Heart right ventricle (tissue), 16 donors: ENCODE measurements at regions of chr17 and their contacts with region 1.

Region 1: DNA sequence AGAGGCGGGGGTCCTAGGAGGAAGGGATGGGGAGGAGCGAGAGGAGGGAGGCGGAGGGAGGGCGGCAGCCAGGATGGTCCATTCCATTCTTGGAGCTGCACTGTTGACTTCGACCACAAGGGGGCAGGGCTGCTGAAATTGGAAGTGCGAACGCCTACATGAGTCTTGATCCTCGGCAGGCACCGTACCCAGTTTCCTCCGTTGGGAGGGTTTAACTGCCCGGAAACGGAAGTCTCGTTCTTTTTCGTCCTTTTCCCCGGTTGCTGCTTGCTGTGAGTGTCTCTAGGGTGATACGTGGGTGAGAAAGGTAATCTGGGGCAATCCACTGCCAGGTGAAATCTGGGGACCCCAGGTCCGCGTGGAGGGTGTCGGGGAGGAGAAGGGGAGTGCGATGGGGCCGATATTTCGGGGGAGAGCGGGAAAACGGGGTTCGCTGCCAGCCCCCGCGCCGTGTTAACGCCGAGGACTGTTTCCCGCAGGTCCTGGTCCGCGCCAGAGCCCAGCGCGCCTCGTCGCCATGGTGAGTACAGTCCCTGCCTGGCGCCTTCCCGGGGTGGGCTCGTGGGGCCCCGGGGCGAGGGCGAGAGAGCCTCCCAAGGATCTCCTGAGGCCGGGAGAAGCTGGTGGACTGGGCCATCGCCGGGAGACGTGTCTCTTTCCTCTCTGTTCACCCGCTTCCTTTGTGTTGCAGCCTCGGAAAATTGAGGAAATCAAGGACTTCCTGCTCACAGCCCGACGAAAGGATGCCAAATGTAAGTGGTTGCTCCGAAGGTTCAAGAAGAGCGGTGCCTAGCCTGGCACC is at the start of gene RPL38:
- DNase-seq: peak; percentile 92 to 98
- ATAC-seq: peak; percentile 80 to 94 (median 88)
- H3K4me3 ChIP-seq: peak within 1 kb of the TSS; percentile 76 to 100 (median 94)
- H3K27ac ChIP-seq: peak within 1 kb of the TSS in 9 of 10 donors; percentile 73 to 95 (median 84)
- H3K4me1 ChIP-seq: peaks cover 9 to 58% (median 45%) of the 10 kb centered on the region in 9 donors
- H3K27me3 ChIP-seq: peaks cover 0 to 29% (median 23%) of the 10 kb centered on the region in 7 donors
- CTCF ChIP-seq: peak; percentile 92 to 97 (median 95)
- total RNA-seq, gene RPL38: 661 to 847 (median 735) TPM

Region 2: DNA sequence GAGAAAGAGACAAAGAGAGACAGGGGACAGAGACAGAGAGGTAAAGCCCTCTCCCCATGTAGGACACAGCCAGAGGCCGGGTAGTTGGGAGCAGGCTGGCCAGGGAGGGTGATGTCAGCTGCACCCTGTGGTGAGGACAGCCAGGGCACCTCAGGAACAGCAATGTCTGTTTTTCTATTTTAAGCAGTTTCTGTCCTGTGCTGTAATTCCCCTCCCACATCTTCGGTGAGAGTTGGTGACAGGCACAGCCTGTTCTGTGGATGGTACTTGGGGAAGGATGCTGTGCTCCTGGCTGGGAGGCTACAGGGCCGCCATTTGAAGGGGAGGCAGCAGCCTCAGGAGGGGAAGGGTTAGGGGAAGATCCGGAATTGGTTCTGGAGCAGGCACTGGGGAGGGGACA is 722.9 kb before region 1 on chr17:
- intact Hi-C with region 1: loop called in 1 of 10 experiments (anchors 5 kb)
- DNase-seq: peak; percentile 48 to 55
- ATAC-seq: peak; percentile 80 to 93 (median 88)
- H3K4me3 ChIP-seq: no peak overlapping the region
- H3K27ac ChIP-seq: peak overlapping the region in 5 of 10 donors; percentile 22 to 77 (median 29)
- H3K4me1 ChIP-seq: peaks cover 0 to 37% (median 7%) of the 10 kb centered on the region in 9 donors
- H3K27me3 ChIP-seq: peaks cover 0 to 5% (median 0%) of the 10 kb centered on the region in 7 donors
- CTCF ChIP-seq: no peak

Region 3: GRCh38 chr17:74245145-74245831 is 41.6 kb after region 1 on chr17:
- intact Hi-C with region 1: loop called in 1 of 10 experiments (anchors 5 kb)
- DNase-seq: no peak
- ATAC-seq: no peak
- H3K4me3 ChIP-seq: no peak overlapping the region
- H3K27ac ChIP-seq: no peak overlapping the region
- H3K4me1 ChIP-seq: peaks cover 14 to 48% (median 38%) of the 10 kb centered on the region in 9 donors
- H3K27me3 ChIP-seq: no peaks in the 10 kb centered on the region
- CTCF ChIP-seq: no peak

Region 4: DNA sequence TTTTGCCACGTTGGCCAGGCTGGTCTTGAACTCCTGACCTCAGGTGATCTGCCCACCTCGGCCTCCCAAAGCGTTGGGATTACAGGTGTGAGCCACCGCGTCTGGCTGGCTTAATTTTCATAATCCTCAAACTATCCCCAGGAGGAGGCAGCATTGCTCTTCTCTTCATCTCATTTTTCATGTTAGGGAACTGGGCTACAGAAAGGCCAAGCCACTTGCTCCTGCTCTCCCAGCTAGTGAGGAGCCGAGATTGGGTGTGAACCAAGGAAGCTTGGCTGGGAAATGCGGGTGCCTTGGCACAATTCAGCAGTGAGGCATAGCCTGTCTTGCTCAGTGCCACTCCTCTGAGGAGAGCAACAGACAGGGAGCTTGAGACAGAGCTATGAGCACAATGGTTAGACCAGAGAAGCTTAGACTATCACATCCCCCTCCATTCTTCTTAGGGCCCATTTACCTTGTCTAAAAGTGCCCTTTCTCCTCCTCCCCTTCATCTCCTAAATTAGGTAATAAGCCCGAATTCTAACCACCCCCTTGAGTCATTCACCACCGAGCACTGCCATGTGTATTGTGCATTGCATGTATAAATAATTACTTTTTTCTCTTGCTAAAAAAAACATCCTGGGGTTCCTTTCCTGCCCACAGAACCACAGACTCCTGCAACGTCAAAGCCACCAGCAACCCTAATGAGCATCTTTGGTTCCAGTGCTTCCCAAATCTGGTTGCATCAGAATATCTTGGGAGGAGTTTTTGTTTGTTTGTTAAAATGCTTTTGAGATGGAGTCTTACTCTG is 102.4 kb after region 1 on chr17:
- intact Hi-C with region 1: loop called in 1 of 10 experiments (anchors 5 kb)
- DNase-seq: no peak
- ATAC-seq: peak in 1 of 8 donors; percentile 21
- H3K4me3 ChIP-seq: no peak overlapping the region
- H3K27ac ChIP-seq: no peak overlapping the region
- H3K4me1 ChIP-seq: peaks cover 0 to 14% (median 4%) of the 10 kb centered on the region in 9 donors
- H3K27me3 ChIP-seq: no peaks in the 10 kb centered on the region
- CTCF ChIP-seq: peak in 5 of 9 donors; percentile 10 to 33 (median 23)

Region 5: DNA sequence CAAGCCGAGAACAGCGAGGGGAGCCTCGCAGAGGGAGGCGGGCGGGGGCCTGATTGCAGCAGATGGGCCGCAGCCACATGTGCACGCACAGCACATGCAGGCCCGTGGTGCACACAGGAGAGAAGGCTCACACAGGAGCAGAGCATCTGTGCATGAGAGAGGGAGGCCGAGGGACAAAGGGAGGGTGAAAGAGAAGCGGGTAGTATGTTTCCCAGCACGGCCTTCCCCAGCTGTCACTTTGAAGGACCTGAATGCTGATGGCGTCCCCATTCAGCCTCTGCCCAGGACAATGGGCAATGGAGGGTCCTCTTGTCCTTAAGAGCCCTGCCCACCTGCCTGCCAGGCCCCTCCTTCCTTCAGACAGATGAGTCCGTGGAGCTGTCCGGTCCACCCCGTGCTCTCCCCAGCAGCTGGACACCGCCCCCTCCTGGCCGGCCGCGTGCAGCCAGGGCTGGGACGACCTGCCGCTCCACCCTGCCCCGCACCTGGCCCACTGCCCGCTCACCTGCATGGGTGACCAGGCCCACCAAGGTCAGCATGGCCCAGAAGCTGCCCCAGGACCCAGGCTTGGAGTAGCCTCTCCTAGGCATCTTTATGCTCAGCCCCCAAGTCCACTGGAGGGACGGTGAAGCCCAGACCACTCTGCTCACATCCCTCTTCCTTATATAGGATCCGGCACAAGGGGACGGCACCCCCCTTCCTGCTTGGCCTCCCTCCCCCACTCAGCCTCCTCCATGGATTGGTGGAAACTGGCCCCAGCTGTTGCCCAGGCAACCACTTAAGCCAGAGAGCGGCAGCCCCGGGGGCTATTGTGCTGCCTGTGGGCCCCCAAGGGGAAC is 157.8 kb after region 1 on chr17 and contains the start of gene BTBD17:
- intact Hi-C with region 1: loop called in 1 of 10 experiments (anchors 5 kb)
- DNase-seq: peak; percentile 46 to 70
- ATAC-seq: peak; percentile 75 to 90 (median 82)
- H3K4me3 ChIP-seq: no peak within 1 kb of the TSS
- H3K27ac ChIP-seq: no peak within 1 kb of the TSS
- H3K4me1 ChIP-seq: peaks cover 0 to 18% (median 9%) of the 10 kb centered on the region in 9 donors
- H3K27me3 ChIP-seq: peaks cover 9 to 66% (median 61%) of the 10 kb centered on the region in 7 donors
- CTCF ChIP-seq: peak; percentile 52 to 83 (median 79)
- total RNA-seq, gene BTBD17: not detected

Region 6: DNA sequence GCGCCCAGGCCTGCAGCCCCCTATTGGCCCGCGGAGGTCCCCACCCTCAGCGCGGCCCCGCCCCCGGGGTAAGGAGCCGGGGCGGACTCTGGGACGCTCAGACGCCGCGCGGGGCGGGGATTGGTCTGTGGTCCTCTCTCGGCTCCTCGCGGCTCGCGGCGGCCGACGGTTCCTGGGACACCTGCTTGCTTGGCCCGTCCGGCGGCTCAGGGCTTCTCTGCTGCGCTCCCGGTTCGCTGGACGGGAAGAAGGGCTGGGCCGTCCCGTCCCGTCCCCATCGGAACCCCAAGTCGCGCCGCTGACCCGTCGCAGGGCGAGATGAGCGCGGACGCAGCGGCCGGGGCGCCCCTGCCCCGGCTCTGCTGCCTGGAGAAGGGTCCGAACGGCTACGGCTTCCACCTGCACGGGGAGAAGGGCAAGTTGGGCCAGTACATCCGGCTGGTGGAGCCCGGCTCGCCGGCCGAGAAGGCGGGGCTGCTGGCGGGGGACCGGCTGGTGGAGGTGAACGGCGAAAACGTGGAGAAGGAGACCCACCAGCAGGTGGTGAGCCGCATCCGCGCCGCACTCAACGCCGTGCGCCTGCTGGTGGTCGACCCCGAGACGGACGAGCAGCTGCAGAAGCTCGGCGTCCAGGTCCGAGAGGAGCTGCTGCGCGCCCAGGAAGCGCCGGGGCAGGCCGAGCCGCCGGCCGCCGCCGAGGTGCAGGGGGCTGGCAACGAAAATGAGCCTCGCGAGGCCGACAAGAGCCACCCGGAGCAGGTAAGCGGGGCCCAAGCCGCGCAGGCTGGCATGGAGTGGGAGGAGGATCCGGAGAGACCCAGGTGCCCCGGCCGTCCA is 545.1 kb after region 1 on chr17 and contains the start of gene NHERF1:
- intact Hi-C with region 1: loop called in 1 of 10 experiments (anchors 10 kb)
- DNase-seq: peak; percentile 93 to 96
- ATAC-seq: peak; percentile 93 to 98 (median 96)
- H3K4me3 ChIP-seq: peak within 1 kb of the TSS; percentile 68 to 95 (median 88)
- H3K27ac ChIP-seq: peak within 1 kb of the TSS; percentile 37 to 92 (median 82)
- H3K4me1 ChIP-seq: peaks cover 7 to 84% (median 49%) of the 10 kb centered on the region in 9 donors
- H3K27me3 ChIP-seq: no peaks in the 10 kb centered on the region
- CTCF ChIP-seq: peak in 3 of 9 donors; percentile 19 to 37 (median 25)
- total RNA-seq, gene NHERF1: 6.7 to 33.4 (median 12.7) TPM